ENCODE measurements at regions of chr11 and their contacts with region 1.

Region 1: GRCh38 chr11:83543706-83544439 is 257.7 kb upstream of the CCDC90B start:
- DNase-seq: no peak
- ATAC-seq: no peak
- H3K4me3 ChIP-seq: no peak overlapping the region
- H3K27ac ChIP-seq: no peak overlapping the region
- H3K4me1 ChIP-seq: no peaks in the 10 kb centered on the region
- H3K27me3 ChIP-seq: no peaks in the 10 kb centered on the region
- CTCF ChIP-seq: no peak
- EP300 ChIP-seq: no peak
- POLR2A ChIP-seq: no peak
- RAD21 ChIP-seq: no peak

Region 2: DNA sequence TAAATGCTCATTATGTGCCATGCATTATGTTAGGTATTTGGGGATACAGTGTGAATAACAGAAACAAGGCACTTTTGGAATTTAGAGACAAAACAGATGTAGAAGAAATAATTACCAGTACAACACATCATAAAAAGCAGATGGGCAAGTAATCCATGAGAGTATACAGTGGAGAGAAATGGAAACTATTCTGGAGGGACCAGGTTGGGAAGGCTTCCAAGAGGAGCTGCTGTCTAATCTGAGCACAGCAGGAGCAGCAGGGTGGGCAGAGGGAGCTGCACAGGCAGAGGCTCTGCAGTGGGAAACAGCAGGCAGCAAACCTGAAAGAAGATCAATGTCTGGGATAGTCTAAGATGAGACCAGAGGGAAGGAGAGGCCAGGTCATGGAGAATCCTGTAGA is 11.0 kb after region 1 on chr11:
- CTCF ChIA-PET with region 1: no interaction called
- POLR2A ChIA-PET with region 1: no interaction called
- in situ Hi-C with region 1: no loop called
- intact Hi-C with region 1: no loop called
- DNase-seq: no peak
- ATAC-seq: no peak
- H3K4me3 ChIP-seq: no peak overlapping the region
- H3K27ac ChIP-seq: no peak overlapping the region
- H3K4me1 ChIP-seq: no peaks in the 10 kb centered on the region
- H3K27me3 ChIP-seq: no peaks in the 10 kb centered on the region
- CTCF ChIP-seq: no peak
- EP300 ChIP-seq: no peak
- POLR2A ChIP-seq: no peak
- RAD21 ChIP-seq: no peak

Region 3: DNA sequence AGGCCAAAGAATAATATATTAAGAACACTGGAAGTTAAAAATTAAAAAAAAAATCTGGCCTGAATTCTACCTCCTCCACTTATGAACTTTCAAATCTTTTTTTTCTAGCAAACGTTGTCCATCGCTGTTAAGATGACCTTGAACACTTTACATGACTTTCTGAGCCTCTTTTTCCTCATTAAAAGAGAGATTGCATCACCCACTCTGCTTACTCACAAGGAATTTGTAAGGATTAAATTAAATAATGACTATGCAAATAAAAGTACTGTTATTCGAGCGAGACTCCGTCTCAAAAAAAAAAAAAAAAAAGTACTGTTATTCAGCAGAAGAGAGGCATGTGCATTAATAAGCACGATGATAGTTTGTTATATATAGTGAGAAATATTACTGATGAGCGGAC is 27.4 kb after region 1 on chr11:
- CTCF ChIA-PET with region 1: no interaction called
- POLR2A ChIA-PET with region 1: no interaction called
- in situ Hi-C with region 1: no loop called
- intact Hi-C with region 1: loop called (anchors 2 kb)
- DNase-seq: no peak
- ATAC-seq: no peak
- H3K4me3 ChIP-seq: no peak overlapping the region
- H3K27ac ChIP-seq: no peak overlapping the region
- H3K4me1 ChIP-seq: no peaks in the 10 kb centered on the region
- H3K27me3 ChIP-seq: no peaks in the 10 kb centered on the region
- CTCF ChIP-seq: no peak
- EP300 ChIP-seq: no peak
- POLR2A ChIP-seq: no peak
- RAD21 ChIP-seq: no peak